Mammary epithelial cell (primary cell): ENCODE measurements at regions of chr1 and their contacts with region 1.

Region 1: DNA sequence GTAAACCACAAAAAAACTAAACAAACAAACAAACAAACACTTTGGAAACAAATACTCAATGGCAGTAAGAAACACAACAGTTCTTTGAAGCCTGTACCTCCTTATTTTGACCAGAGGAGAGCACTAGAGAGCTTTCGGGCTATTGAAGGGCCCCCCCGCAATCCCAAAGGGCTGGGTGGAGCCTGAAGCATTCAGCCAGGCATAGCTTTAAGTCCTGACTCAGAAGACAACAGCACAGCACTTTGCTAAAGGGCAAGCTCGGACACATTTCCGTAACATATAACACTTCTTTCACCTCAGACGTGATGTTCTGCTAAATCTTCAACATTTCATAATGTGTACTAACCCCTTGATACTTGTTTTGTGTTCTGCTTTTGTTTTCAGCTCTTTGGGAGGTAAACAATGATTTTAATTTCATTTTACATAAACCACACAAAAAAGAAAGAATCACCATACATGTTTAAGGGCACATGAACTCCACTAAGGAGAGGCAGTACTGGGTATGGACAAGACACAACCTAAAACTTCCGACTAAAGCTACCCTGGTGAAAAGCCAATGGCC is 9.7 kb upstream of the SHCBP1L start:
- DNase-seq: peak; percentile 88
- H3K4me3 ChIP-seq: no peak overlapping the region
- H3K27ac ChIP-seq: peak overlapping the region; percentile 74
- H3K4me1 ChIP-seq: peaks cover 7% of the 10 kb centered on the region
- H3K27me3 ChIP-seq: no peaks in the 10 kb centered on the region
- CTCF ChIP-seq: peak; percentile 95 to 96

Region 2: GRCh38 chr1:182889997-182890396 is 72.6 kb before region 1 on chr1:
- CTCF ChIA-PET with region 1: no interaction called
- dilution Hi-C with region 1: no loop called
- in situ Hi-C with region 1: no loop called
- intact Hi-C with region 1: no loop called
- DNase-seq: no peak
- H3K4me3 ChIP-seq: no peak overlapping the region
- H3K27ac ChIP-seq: no peak overlapping the region
- H3K4me1 ChIP-seq: no peaks in the 10 kb centered on the region
- H3K27me3 ChIP-seq: no peaks in the 10 kb centered on the region
- CTCF ChIP-seq: no peak

Region 3: DNA sequence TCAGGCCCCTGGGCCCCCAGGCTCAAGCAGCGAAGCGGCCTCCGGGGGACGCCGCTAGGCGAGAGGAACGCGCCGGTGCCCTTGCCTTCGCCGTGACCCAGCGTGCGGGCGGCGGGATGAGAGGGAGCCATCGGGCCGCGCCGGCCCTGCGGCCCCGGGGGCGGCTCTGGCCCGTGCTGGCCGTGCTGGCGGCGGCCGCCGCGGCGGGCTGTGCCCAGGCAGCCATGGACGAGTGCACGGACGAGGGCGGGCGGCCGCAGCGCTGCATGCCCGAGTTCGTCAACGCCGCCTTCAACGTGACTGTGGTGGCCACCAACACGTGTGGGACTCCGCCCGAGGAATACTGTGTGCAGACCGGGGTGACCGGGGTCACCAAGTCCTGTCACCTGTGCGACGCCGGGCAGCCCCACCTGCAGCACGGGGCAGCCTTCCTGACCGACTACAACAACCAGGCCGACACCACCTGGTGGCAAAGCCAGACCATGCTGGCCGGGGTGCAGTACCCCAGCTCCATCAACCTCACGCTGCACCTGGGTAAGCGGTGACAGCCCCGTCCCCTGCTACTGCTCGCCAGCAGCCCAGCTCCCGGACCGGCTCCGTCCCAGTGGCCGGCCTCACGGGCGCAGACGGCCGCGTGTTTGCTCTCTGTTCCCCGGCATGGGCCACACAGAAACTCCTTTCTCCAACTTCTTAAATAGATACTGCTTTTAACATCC is 61.1 kb after region 1 on chr1:
- CTCF ChIA-PET with region 1: no interaction called
- dilution Hi-C with region 1: no loop called
- in situ Hi-C with region 1: no loop called
- intact Hi-C with region 1: loop called (anchors 1 kb)
- DNase-seq: peak; percentile 80
- H3K4me3 ChIP-seq: peak overlapping the region; percentile 77 to 96 (median 80)
- H3K27ac ChIP-seq: peak overlapping the region; percentile 87
- H3K4me1 ChIP-seq: peaks cover 50% of the 10 kb centered on the region
- H3K27me3 ChIP-seq: no peaks in the 10 kb centered on the region
- CTCF ChIP-seq: peak; percentile 53 to 82

Region 4: GRCh38 chr1:183101841-183102276 is 139.2 kb after region 1 on chr1:
- CTCF ChIA-PET with region 1: no interaction called
- dilution Hi-C with region 1: no loop called
- in situ Hi-C with region 1: loop called in 1 of 2 experiments (anchors 25 kb)
- intact Hi-C with region 1: no loop called
- DNase-seq: no peak
- H3K4me3 ChIP-seq: no peak overlapping the region
- H3K27ac ChIP-seq: no peak overlapping the region
- H3K4me1 ChIP-seq: peaks cover 16% of the 10 kb centered on the region
- H3K27me3 ChIP-seq: no peaks in the 10 kb centered on the region
- CTCF ChIP-seq: no peak

Region 5: DNA sequence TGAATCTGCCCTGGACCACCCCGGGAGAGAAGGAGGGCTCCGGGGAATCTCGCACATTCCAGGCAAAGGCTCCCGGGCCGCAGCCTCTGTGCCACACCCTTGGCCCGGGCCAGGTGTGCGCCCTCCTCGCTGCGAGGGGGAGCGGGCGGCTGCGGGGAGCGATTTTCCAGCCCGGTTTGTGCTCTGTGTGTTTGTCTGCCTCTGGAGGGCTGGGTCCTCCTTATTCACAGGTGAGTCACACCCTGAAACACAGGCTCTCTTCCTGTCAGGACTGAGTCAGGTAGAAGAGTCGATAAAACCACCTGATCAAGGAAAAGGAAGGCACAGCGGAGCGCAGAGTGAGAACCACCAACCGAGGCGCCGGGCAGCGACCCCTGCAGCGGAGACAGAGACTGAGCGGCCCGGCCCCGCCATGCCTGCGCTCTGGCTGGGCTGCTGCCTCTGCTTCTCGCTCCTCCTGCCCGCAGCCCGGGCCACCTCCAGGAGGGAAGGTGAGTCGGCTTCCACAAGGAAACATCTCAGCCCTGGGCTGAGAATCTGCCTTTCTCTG is 223.4 kb after region 1 on chr1 and contains the start of gene LAMC2:
- CTCF ChIA-PET with region 1: no interaction called
- dilution Hi-C with region 1: no loop called
- in situ Hi-C with region 1: no loop called
- intact Hi-C with region 1: loop called (anchors 1 kb)
- DNase-seq: peak; percentile 99
- H3K4me3 ChIP-seq: peak within 1 kb of the TSS; percentile 62 to 98 (median 92)
- H3K27ac ChIP-seq: peak within 1 kb of the TSS; percentile 100
- H3K4me1 ChIP-seq: peaks cover 55% of the 10 kb centered on the region
- H3K27me3 ChIP-seq: no peaks in the 10 kb centered on the region
- CTCF ChIP-seq: peak; percentile 34 to 71
- total RNA-seq, gene LAMC2: 1,201 to 2,277 TPM

Region 6: GRCh38 chr1:183227963-183228649 is 265.5 kb after region 1 on chr1:
- CTCF ChIA-PET with region 1: interaction called, 3 read pairs
- dilution Hi-C with region 1: no loop called
- in situ Hi-C with region 1: no loop called
- intact Hi-C with region 1: loop called (anchors 1 kb)
- DNase-seq: no peak
- H3K4me3 ChIP-seq: no peak overlapping the region
- H3K27ac ChIP-seq: no peak overlapping the region
- H3K4me1 ChIP-seq: peaks cover 52% of the 10 kb centered on the region
- H3K27me3 ChIP-seq: no peaks in the 10 kb centered on the region
- CTCF ChIP-seq: peak; percentile 75 to 79

Region 7: DNA sequence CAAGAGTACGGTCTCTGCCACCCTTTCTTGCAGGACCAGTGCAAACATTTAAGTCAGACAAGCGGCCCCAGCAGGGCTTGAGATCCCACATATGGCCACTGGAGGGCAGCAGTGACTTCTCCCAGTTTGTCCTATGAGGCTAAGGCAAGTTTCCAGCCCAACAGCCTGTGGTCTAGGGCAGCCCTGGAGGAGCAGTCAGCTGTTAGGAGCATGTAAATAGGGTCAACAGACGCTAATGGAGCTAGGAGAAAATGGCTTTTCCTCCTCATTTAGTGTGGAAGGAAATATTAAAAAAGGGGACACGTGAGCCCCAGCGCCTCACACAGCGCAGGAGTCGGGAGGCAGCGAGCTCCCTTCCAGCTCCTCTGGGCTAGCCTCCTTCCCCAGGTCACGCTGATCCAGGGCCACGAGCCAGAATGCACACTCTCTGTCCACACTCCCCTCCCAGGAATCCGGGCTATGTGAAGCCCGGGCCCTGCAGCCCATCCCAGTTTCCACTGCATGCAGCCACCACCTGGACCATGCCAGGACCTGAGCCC is 319.0 kb after region 1 on chr1:
- CTCF ChIA-PET with region 1: interaction called, 6 read pairs
- dilution Hi-C with region 1: no loop called
- in situ Hi-C with region 1: no loop called
- intact Hi-C with region 1: loop called (anchors 1 kb)
- DNase-seq: peak; percentile 85
- H3K4me3 ChIP-seq: no peak overlapping the region
- H3K27ac ChIP-seq: peak overlapping the region; percentile 58
- H3K4me1 ChIP-seq: peaks cover 67% of the 10 kb centered on the region
- H3K27me3 ChIP-seq: no peaks in the 10 kb centered on the region
- CTCF ChIP-seq: peak; percentile 77 to 95

Region 8: DNA sequence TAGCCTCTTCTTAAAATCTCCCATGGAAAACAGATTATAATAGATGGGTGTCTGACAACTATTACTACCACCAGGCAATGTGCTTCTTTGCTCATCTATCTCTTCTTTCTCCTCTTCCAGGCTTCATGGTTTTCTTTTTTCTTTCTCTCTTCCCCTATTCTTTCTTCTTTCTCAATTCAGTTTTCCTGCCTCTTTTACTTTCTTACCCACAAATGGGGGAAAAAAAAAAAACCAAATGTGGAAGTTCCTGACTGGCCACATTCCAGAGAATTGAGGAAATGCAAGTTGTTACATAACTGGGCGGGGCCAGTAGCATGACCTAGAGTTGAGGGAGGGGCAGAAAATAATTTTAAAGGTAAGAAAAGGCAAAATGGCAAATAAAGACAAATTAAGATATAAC is 498.7 kb after region 1 on chr1:
- CTCF ChIA-PET with region 1: no interaction called
- dilution Hi-C with region 1: no loop called
- in situ Hi-C with region 1: no loop called
- intact Hi-C with region 1: loop called (anchors 10 kb)
- DNase-seq: peak; percentile 60
- H3K4me3 ChIP-seq: no peak overlapping the region
- H3K27ac ChIP-seq: peak overlapping the region; percentile 32
- H3K4me1 ChIP-seq: peaks cover 19% of the 10 kb centered on the region
- H3K27me3 ChIP-seq: no peaks in the 10 kb centered on the region
- CTCF ChIP-seq: no peak